ENCODE measurements at regions of chr3 and their contacts with region 1.

Region 1: DNA sequence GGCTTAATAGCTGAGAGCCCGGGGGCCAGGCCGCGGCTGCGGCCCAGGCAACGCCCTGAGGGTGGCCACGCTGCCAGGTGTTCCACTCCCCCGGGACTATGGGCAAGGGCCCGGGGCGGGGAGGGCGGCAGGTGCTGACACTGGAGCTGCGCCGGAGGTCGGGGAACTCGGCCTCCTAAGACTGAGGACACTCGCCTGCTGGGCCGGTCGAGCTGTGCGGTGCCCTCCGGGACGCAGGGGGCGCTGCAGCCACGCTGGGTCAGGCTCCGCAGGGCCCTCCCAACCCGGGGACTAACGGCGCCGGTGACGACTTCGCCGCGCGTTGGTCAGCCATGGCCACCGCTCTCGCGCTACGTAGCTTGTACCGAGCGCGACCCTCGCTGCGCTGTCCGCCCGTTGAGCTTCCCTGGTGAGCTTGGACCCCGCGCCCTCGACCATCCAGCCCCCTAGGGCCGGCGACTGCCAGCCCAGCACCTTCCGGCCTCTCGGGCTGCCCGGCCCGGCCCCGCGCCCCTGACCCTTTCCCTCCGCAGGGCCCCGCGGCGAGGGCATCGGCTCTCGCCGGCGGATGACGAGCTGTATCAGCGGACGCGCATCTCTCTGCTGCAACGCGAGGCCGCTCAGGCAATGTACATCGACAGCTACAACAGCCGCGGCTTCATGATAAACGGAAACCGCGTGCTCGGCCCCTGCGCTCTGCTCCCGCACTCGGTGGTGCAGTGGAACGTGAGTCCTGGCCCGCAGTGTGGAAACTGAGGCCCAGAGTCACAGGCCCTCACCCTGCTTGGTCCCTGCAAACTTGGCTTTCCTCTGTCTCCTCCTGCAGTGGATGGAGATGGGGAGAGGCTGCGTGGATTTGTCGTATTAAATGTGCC is at the start of gene NDUFAF3:
- DNase-seq: peak; percentile 96
- ATAC-seq: peak; percentile 66
- H3K4me3 ChIP-seq: peak within 1 kb of the TSS; percentile 66 to 92 (median 89)
- H3K4me3 Mint-ChIP-seq: peak within 1 kb of the TSS; percentile 96
- H3K27ac ChIP-seq: peak within 1 kb of the TSS; percentile 96 to 98
- H3K27ac Mint-ChIP-seq: peak within 1 kb of the TSS; percentile 97
- H3K4me1 ChIP-seq: peaks cover 36 to 60% of the 10 kb centered on the region in 2 donors
- H3K4me1 Mint-ChIP-seq: peaks cover 65% of the 10 kb centered on the region
- H3K27me3 ChIP-seq: no peaks in the 10 kb centered on the region
- H3K27me3 Mint-ChIP-seq: no peaks in the 10 kb centered on the region
- CTCF ChIP-seq: peak; percentile 95
- total RNA-seq, gene NDUFAF3: 67.0 and 67.5 TPM in 2 replicates

Region 2: GRCh38 chr3:47553407-47553806 is 1468.6 kb before region 1 on chr3:
- CTCF ChIA-PET with region 1: no interaction called
- POLR2A ChIA-PET with region 1: interaction called, 11 read pairs
- intact Hi-C with region 1: no loop called
- DNase-seq: no peak
- ATAC-seq: no peak
- H3K4me3 ChIP-seq: no peak overlapping the region
- H3K4me3 Mint-ChIP-seq: no peak overlapping the region
- H3K27ac ChIP-seq: no peak overlapping the region
- H3K27ac Mint-ChIP-seq: no peak overlapping the region
- H3K4me1 ChIP-seq: no peaks in the 10 kb centered on the region
- H3K4me1 Mint-ChIP-seq: no peaks in the 10 kb centered on the region
- H3K27me3 ChIP-seq: peaks cover 0 to 7% (median 0%) of the 10 kb centered on the region in 4 experiments
- H3K27me3 Mint-ChIP-seq: peaks cover 22% of the 10 kb centered on the region
- CTCF ChIP-seq: no peak

Region 3: DNA sequence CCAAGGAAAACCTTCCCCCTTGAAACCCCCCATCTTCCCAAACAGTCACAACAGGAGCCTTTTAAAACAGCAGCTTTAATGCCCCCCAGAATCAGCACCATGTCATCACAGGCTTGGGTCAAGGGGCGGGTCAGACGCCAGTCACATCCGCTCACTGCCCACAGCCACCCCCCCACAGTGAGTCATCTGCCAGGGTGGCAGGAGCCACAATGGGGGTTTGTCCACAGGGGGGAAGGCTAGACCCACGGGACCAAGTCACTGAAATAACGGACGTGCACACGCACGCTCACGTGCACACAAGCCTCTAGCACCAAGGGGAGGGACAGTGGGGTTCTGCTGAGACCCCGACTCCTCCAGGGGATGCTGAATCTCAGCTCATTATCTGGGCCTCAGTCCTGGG is 458.0 kb before region 1 on chr3:
- CTCF ChIA-PET with region 1: no interaction called
- POLR2A ChIA-PET with region 1: interaction called, 10 read pairs
- intact Hi-C with region 1: loop called (anchors 5 kb)
- DNase-seq: no peak
- ATAC-seq: no peak
- H3K4me3 ChIP-seq: no peak overlapping the region
- H3K4me3 Mint-ChIP-seq: no peak overlapping the region
- H3K27ac ChIP-seq: no peak overlapping the region
- H3K27ac Mint-ChIP-seq: no peak overlapping the region
- H3K4me1 ChIP-seq: peaks cover 11 to 13% of the 10 kb centered on the region in 2 donors
- H3K4me1 Mint-ChIP-seq: peaks cover 14% of the 10 kb centered on the region
- H3K27me3 ChIP-seq: no peaks in the 10 kb centered on the region
- H3K27me3 Mint-ChIP-seq: no peaks in the 10 kb centered on the region
- CTCF ChIP-seq: no peak

Measured in B cell (primary cell).